ENCODE measurements at regions of chr12 and their contacts with region 1.

Region 1: DNA sequence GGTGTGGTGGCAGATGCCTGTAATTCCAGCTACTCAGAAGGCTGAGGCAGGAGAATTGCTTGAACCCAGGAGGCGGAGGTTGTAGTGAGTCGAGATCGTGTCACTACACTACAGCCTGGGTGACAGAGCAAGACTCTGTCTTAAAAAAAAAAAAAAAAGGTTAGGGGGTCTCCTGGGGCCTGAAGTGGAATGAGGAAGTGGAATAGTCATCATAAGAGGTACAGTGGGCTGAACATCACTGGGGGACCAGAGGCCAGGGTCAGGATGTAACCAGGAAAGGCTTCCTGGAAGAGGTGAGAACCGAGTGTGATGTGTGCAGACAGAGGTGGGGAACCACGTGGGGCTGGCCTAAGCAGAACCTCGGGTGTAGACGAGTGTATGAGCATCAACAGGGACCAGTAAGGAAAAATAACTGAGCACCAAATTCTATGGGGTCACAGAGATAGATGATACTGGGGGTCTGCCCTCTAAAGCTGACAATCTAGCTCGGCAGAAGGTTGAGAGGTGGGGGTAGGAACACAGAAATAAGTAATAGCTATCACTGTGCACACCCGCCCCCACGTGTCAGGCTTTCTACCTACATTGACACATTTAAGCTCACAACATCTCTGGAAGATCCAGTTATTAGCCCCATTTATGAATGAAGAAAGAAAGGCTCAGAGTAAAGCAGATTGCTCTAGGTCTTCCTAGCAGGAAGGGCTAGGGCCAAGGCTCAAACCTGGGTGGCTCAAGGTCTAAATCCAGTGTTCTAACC is 5.0 kb upstream of the COX6A1 start:
- DNase-seq: no peak
- H3K4me3 ChIP-seq: no peak overlapping the region
- H3K27ac ChIP-seq: no peak overlapping the region
- H3K4me1 ChIP-seq: no peaks in the 10 kb centered on the region
- H3K27me3 ChIP-seq: no peaks in the 10 kb centered on the region
- CTCF ChIP-seq: no peak
- POLR2A ChIP-seq: no peak

Region 2: DNA sequence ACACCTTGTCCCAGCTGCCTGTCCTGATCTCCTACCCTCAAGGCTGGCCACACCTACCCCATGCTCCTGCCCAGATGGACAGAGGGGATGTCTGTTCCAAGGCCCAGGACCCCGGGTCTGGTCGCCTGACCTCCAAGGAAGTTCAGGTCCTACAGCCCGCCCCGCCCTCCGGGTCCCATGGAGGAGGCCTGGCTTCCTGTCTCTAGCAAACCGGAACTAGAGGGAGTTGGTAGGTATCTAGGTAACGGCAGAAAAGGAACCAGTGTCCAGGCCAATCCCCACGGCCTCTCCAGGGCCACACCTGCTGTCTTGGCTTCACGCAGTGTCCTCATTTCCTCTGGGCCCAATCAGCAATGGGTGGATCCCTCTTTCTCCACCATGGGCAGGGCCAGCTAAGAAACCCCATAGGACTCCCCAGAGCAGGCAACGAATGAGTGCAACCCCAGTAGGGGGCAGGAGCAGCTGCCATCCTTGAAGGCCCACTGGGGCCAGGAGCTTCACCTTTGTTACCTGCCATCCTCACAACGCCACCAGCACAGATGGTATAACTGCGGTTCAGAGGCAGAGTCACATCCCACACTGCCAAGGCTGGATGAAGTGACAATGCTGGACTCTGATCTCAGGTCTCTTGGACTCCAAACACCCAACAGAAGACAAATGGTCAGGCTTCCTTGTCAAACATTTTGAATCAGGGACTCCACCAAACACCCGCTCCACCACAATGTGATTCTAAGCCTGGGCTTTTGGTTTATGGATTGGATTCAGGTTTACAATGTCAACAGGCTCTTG is 206.9 kb before region 1 on chr12:
- intact Hi-C with region 1: no loop called
- DNase-seq: no peak
- H3K4me3 ChIP-seq: no peak overlapping the region
- H3K27ac ChIP-seq: peak overlapping the region in 2 of 3 donors; percentile 75 to 84
- H3K4me1 ChIP-seq: peaks cover 52 to 65% of the 10 kb centered on the region in 2 donors
- H3K27me3 ChIP-seq: no peaks in the 10 kb centered on the region
- CTCF ChIP-seq: no peak
- POLR2A ChIP-seq: no peak

Region 3: DNA sequence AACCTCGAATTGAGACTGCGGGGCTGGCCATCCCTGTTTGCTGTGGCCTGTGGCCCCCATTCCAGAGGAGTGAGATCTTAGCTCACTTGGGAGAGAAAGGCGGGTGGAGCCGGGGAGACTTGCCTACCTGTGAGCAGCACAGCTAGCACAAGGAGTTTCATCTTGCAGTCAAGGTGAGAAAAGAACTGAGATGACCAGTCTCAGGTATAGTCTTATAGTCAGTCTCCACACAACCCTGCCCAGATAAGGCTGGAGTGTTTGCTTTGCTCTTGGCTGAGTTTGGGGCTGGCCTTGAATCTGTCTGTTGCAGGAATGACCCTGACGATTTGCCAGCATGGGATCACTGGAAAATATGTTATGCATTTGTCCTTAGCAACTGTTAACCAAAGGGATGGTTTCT is 105.4 kb before region 1 on chr12 and contains the start of gene PLA2G1B:
- intact Hi-C with region 1: loop called (anchors 5 kb)
- DNase-seq: no peak
- H3K4me3 ChIP-seq: no peak within 1 kb of the TSS
- H3K27ac ChIP-seq: no peak within 1 kb of the TSS
- H3K4me1 ChIP-seq: no peaks in the 10 kb centered on the region
- H3K27me3 ChIP-seq: no peaks in the 10 kb centered on the region
- CTCF ChIP-seq: no peak
- POLR2A ChIP-seq: no peak
- total RNA-seq, gene PLA2G1B: not detected

Region 4: GRCh38 chr12:120356567-120357030 is 76.3 kb before region 1 on chr12:
- intact Hi-C with region 1: loop called (anchors 5 kb)
- DNase-seq: peak; percentile 73 to 74
- H3K4me3 ChIP-seq: no peak overlapping the region
- H3K27ac ChIP-seq: no peak overlapping the region
- H3K4me1 ChIP-seq: peaks cover 3 to 8% of the 10 kb centered on the region in 2 donors
- H3K27me3 ChIP-seq: no peaks in the 10 kb centered on the region
- CTCF ChIP-seq: peak; percentile 46 to 83 (median 74)
- POLR2A ChIP-seq: no peak